HEK293T (cell line): ENCODE measurements at regions of chr6 and their contacts with region 1.

Region 1: DNA sequence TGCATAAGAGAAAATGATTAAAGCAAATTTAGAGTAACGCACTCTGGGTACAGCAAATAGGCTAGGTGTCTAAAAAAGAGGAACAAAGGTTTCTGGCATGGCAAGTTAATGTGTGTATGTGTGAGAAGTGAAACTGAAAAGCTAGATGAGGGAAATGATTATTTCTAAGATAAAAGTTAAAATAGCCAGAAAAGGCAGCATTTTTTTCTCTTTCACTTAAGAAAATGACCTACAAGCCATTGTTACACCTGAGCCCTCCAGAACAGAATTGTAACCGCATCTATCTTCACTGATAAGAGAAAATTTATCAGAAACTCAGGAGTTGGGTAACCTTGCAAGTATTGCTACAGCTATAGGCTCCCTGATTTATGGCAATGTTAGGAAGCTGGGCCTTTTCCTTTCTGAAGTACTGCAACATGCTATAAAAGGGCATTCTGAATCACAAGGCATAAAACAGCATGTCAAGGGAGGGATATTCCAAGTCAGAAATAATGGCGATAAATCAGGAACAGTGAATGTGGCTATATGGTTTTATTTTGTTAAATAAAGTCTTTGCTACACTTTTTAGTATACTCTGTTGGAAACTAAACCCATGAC is 395.3 kb downstream of the TBC1D32 start:
- DNase-seq: no peak

Region 2: DNA sequence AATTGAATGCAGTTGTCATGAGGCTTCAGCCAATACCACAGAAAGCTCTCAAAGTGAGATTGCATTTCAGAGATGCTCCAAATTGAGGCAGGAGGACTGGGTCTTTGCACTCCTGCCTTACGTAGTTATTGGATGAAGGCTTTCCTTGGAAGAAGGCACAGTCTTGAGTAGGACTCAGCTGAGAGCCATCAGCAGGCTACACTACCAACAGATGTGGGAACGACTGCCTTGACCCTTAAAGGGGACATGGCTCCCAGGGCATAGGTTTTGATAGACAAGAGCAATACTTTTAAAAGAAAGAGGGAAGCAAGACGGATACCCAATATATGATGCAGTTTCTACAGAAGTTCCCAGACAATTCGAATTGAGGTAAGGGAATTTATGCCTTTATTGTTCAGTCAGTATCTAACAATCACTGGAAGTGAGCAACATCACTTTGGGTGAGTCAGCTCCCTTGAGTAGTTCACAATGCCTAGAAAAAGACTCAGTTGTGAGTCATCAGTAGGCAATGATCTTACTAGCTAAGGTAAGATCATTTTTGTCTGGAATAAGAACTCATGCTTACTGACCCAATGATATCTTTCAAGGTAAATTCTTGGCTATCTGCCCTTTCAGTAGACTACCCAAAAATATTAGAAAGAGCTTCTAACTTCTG is 887.3 kb after region 1 on chr6:
- CTCF ChIA-PET with region 1: interaction called, 10 read pairs
- POLR2A ChIA-PET with region 1: no interaction called
- DNase-seq: no peak